Activated T-helper 1 cell treated with anti-CD3 and anti-CD28 coated beads, Interleukin-12 subunit alpha, Interleukin-12 subunit beta, Interleukin-2, Interleukin-4 antibody, amounts not matched to agents 30 ng/mL and 10 ng/mL and 1 ng/mL, durations not matched to agents 14 hours and 24 hours and 36 hours (primary cell): ENCODE measurements at regions of chrX and their contacts with region 1.

Region 1: DNA sequence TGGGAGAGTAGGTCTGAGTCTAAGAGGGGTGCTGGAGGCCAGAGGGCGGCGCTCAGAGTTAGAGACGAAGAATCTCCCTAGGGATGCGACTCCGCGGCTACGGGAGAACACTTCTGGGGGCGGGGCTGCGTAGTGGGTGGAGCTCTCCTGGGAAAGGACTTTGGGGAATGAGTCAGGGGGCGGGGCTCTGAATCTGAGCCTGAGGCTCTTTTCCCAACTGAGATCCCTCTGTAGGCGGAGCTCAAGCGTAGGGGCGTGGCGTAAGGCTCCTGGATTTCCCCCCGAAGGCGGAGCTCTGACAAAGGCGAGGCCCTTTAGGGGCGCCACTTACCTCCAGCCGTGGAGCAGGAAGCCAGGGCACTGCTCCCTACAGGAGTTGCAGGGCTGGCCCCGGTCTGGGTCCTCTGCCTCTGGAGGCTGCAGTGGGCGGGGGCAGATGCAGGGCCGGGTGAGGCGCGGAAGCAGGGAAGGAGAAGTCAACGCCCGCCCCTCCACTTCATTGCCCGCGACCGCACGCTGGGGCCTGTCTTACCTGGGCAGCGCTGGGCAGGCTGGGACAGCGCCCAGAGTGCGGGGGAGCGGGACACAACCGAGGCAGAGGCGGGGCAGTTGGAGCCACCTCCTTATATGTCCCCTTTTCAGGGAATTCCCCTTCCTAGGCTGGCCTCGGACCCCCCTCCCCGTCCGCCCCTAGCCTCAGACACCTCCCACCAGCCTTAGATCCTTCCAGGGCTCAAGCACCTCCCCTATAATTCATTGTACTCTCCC is 1.7 kb downstream of the PRICKLE3 start:
- DNase-seq: no peak
- H3K4me3 Mint-ChIP-seq: peak overlapping the region; percentile 84
- H3K27ac Mint-ChIP-seq: peak overlapping the region; percentile 75
- H3K4me1 Mint-ChIP-seq: peaks cover 13% of the 10 kb centered on the region
- H3K27me3 Mint-ChIP-seq: no peaks in the 10 kb centered on the region

Region 2: DNA sequence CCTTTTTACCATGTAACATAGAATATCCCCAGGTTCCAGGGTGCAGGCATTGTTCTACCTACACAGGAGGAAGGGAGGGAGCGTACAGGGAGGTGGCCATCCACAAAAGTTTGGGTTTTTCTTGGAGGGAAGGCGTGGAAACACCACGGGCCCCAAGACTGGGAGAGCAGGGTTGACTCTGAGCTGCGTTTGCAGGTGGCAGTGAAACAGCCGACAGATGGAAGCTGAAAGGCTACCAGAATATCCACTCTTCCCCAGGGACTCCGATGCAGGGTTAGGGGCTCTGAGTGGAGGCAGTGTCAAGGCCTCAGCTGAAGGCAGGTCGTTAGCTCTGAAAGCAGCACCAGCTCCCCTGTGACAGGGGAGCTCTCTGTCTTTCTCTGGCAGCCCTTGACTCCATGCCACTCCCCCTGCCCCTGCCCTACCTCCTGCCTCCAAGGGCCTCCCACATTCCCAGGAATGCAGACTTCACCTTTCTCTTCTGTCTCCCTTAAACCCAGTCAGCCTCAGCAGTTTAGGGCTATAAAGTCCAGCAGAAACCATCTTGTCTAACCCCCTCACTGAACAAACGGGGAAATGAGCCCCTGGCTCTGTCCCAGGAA is 437.0 kb before region 1 on chrX:
- intact Hi-C with region 1: no loop called
- DNase-seq: no peak
- H3K4me3 Mint-ChIP-seq: no peak overlapping the region
- H3K27ac Mint-ChIP-seq: no peak overlapping the region
- H3K4me1 Mint-ChIP-seq: peaks cover 7% of the 10 kb centered on the region
- H3K27me3 Mint-ChIP-seq: no peaks in the 10 kb centered on the region

Region 3: DNA sequence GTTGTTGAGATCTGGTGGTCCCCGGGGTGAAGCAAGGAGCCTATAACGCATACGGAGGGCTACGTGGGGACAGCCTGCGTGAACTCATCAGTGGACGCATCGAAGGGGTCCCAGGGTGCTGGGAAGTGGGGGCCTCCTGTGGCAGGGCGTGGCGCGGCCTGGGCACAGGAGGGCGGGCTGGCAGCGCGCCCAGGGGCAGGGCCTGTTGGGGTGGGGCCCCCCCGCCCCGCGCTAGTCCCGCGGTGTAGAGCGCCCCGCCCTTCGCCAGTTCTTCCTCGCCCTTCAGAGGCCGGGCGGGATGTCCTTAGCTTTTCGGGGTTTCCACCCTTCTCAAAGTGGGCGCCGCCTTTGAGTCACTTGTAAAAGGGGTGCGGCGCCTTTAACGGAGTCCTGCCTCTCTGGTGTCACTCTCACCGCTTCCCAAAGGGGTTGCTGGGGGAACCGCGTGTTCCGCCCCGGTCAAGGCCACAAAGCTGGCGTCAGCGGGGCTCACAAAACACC is 12.1 kb before region 1 on chrX:
- intact Hi-C with region 1: loop called (anchors 1 kb)
- DNase-seq: peak; percentile 55
- H3K4me3 Mint-ChIP-seq: peak overlapping the region; percentile 88
- H3K27ac Mint-ChIP-seq: peak overlapping the region; percentile 84
- H3K4me1 Mint-ChIP-seq: peaks cover 15% of the 10 kb centered on the region
- H3K27me3 Mint-ChIP-seq: peaks cover under 1% of the 10 kb centered on the region